G401 (cell line): ENCODE measurements at regions of chr22 and their contacts with region 1.

Region 1: GRCh38 chr22:44080936-44081861 is 57.1 kb downstream of the PARVB start:
- DNase-seq: peak; percentile 88

Region 2: GRCh38 chr22:43976861-43977795 is 104.1 kb before region 1 on chr22:
- in situ Hi-C with region 1: no loop called
- DNase-seq: no peak

Region 3: GRCh38 chr22:43993027-43993760 is 88.0 kb before region 1 on chr22:
- in situ Hi-C with region 1: loop called (anchors 5 kb)
- DNase-seq: peak; percentile 64